ENCODE measurements at regions of chr2 and their contacts with region 1.

Region 1: DNA sequence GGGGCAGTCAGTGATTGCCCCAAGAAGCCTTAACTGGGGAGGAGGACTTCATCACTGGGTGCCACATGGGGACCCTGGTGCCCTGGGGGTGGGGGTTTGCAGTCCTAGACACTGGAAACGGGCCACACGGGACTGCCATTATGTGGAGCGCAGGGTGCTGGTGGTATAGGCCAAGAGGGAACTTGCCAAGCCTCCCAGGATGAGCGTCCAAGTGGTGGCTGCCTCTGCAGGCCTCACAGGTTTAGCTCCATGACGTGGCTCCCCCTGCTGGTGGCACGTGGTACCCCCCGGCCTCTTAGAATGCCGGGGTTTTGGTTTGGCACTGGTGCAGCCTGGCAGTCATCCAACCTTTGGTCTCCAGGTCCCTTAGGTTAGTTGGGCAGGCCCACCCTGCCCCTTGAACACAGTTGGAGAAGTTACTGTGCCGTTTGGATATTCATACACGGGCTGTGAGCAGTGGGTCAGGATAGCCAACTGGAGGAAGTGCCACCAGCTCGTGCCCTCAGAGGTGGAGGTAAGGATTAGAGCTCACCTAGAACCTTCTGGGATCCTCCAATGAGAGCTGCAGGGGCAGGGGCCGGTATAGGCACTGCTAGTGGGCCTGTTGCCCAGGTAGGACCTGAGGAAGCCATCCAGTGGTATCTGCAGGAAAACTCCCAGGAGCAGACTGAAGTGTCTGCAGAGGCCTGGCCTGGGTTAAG is 5.6 kb downstream of the PTMA start:
- DNase-seq: peak; percentile 91
- H3K4me3 ChIP-seq: peak overlapping the region; percentile 18
- H3K27ac ChIP-seq: peak overlapping the region; percentile 68
- H3K4me1 ChIP-seq: peaks cover 63% of the 10 kb centered on the region
- CTCF ChIP-seq: peak; percentile 94

Region 2: DNA sequence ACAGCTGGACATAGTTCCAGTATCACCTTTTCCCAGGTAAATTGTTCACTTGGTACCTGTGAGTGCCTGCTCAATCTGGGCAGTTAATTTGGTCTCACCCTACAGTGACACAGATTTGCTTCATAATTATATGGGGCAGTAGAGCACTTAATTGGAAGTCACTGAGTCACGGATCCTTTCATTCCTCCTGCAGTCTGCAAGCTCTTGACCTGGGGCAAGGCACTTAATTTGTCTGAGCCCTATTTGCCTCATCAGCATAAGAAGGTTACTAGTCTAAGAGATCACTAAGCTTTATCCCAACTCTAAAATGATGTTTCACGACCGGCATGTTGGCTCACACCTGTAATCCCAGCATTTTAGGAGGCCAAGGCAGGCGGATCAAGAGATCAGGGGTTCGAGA is 1782.6 kb before region 1 on chr2:
- CTCF ChIA-PET with region 1: no interaction called
- POLR2A ChIA-PET with region 1: no interaction called
- intact Hi-C with region 1: no loop called
- DNase-seq: no peak
- H3K4me3 ChIP-seq: no peak overlapping the region
- H3K27ac ChIP-seq: no peak overlapping the region
- H3K4me1 ChIP-seq: no peaks in the 10 kb centered on the region
- CTCF ChIP-seq: no peak

Region 3: GRCh38 chr2:231530091-231531011 is 183.5 kb before region 1 on chr2 and contains the start of gene NMUR1:
- CTCF ChIA-PET with region 1: no interaction called
- POLR2A ChIA-PET with region 1: no interaction called
- intact Hi-C with region 1: no loop called
- DNase-seq: peak; percentile 45
- H3K4me3 ChIP-seq: no peak within 1 kb of the TSS
- H3K27ac ChIP-seq: no peak within 1 kb of the TSS
- H3K4me1 ChIP-seq: no peaks in the 10 kb centered on the region
- CTCF ChIP-seq: peak; percentile 85
- total RNA-seq, gene NMUR1: not detected in 2 replicates

Region 4: DNA sequence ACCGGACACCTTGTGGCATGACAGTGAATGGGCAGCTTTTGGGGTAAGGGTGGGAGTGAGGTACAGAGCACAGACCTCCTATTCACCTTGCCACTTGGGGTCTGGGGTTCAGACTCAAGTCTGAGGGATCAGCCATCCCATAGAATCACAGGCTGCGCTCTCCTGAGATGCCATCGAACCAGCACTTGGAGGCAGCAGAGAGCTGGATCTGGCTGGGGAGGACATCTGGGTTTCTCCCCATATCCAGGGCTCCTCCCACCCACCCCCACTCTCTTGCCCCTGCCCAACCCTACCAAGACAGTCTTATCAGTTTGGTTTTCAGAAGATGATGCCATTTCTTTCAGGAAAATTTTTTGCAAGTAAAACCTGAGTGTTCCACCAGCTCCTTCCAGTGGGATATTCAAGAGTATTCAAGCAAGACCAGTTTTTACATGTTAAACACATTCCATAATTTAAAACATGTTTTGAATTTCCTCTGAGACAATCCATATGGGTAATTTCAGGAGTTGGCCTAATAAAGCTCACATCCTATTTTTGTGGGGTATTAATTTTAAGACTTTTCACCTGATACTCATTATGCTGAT is 150.4 kb before region 1 on chr2:
- CTCF ChIA-PET with region 1: no interaction called
- POLR2A ChIA-PET with region 1: interaction called, 3 read pairs
- intact Hi-C with region 1: loop called (anchors 5 kb)
- DNase-seq: peak; percentile 68
- H3K4me3 ChIP-seq: no peak overlapping the region
- H3K27ac ChIP-seq: no peak overlapping the region
- H3K4me1 ChIP-seq: peaks cover 6% of the 10 kb centered on the region
- CTCF ChIP-seq: peak; percentile 76

Region 5: GRCh38 chr2:231648587-231649174 is 65.2 kb before region 1 on chr2:
- CTCF ChIA-PET with region 1: interaction called, 3 read pairs
- POLR2A ChIA-PET with region 1: interaction called, 6 read pairs
- intact Hi-C with region 1: loop called (anchors 1 kb)
- DNase-seq: peak; percentile 81
- H3K4me3 ChIP-seq: no peak overlapping the region
- H3K27ac ChIP-seq: no peak overlapping the region
- H3K4me1 ChIP-seq: peaks cover 26% of the 10 kb centered on the region
- CTCF ChIP-seq: peak; percentile 81

Region 6: GRCh38 chr2:231687133-231687852 is 26.6 kb before region 1 on chr2:
- CTCF ChIA-PET with region 1: interaction called, 6 read pairs
- POLR2A ChIA-PET with region 1: interaction called, 9 read pairs
- intact Hi-C with region 1: loop called (anchors 2 kb)
- DNase-seq: peak; percentile 92
- H3K4me3 ChIP-seq: peak overlapping the region; percentile 68
- H3K27ac ChIP-seq: peak overlapping the region; percentile 71
- H3K4me1 ChIP-seq: peaks cover 79% of the 10 kb centered on the region
- CTCF ChIP-seq: peak; percentile 86